ENCODE measurements at regions of chr17 and their contacts with region 1.

Region 1: DNA sequence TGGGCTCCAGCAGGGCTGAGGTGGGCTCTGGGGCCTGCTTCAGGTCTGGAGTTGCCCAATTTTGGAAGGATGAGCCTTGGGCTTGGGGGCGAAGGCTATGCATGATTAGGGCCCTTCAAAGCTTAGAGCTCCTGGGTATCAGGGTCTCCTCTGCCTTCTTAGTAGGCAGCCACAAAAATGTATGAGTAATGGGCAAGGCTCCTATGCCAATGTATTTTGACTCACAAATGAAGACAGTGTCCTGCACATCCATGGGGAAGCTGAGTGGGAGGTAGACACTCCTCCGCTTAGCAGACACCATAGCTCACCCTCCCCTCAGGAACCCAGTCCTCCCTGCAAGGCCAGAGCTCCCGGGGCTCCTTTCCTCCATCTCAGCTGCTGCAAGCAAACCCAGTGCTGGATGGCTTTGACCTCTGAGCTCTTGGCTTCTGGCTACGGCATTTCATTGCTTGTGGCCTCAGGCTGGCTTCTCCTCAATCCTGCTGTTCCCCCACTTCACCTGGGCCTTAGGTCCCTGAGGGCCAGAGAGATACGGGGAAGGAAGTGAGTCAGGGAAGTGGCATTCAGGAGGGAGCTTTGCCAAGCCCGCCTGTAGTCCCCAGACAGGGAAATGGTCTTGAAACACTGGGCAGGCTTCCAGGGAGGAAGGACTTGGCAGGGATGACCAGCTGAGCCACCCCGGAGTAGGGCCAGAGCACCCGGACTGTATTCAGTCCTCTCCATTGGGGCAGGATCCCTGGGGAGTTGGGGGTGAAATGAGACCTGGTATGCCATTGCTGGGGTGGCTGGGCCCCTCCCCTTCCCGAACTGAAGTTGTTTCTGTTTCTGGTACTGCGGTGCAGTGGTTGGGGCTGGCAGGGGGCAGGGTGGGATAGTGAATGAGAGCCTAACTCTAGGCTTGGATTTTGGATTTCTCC is 4.4 kb downstream of the ABCC3 start:
- DNase-seq: peak; percentile 33

Region 2: DNA sequence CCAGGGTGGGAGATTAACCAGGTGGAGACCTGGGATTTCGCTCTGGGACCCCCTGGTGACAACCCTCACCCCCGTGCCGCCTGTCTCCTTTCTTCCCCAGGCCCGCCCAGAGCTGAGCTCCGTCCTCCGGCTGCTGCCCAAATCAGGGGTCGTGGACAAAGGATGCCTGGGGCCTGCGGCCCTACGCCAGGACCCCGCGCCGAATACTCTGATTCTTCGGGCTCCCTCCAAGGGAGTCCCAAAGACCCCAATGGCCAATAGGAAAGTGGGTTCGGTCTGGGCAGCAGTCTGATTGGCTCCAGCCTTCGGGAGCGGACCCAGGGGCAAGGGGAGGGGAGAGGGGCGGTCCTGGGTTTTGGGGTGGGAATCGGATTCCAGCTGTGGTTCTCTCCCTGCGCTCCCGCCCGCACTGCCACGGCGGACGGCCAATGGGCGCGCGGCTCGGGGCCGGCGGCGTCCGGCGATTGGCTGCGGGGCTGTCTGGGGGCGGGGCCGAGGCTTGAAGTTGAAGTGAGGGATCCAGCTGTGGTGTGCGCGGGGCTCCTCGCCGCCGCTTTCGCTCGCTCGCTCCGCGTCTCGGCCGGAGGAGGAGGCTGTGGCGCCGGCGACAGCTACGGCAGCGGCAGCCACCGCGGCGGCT is 78.8 kb before region 1 on chr17 and contains the start of gene CACNA1G:
- in situ Hi-C with region 1: loop called (anchors 5 kb)
- DNase-seq: peak; percentile 69
- total RNA-seq, gene CACNA1G: 5.1 and 13.0 TPM in 2 replicates

Measured in G401 (cell line).